Endothelial cell of umbilical vein (primary cell): ENCODE measurements at regions of chr5 and their contacts with region 1.

Region 1: GRCh38 chr5:173615884-173616576 is 420 bp downstream of the BOD1 start:
- DNase-seq: peak; percentile 81
- H3K4me3 ChIP-seq: peak overlapping the region; percentile 69 to 86 (median 82)
- H3K27ac ChIP-seq: peak overlapping the region; percentile 85
- H3K4me1 ChIP-seq: peaks cover 28% of the 10 kb centered on the region
- H3K27me3 ChIP-seq: no peaks in the 10 kb centered on the region
- CTCF ChIP-seq: peak; percentile 67 to 75
- POLR2A ChIP-seq: peak; percentile 15

Region 2: GRCh38 chr5:173293817-173294672 is 322.0 kb before region 1 on chr5:
- CTCF ChIA-PET with region 1: interaction called, 28 read pairs
- POLR2A ChIA-PET with region 1: no interaction called
- dilution Hi-C with region 1: no loop called
- intact Hi-C with region 1: no loop called
- DNase-seq: peak; percentile 75
- H3K4me3 ChIP-seq: no peak overlapping the region
- H3K27ac ChIP-seq: no peak overlapping the region
- H3K4me1 ChIP-seq: peaks cover 22% of the 10 kb centered on the region
- H3K27me3 ChIP-seq: no peaks in the 10 kb centered on the region
- CTCF ChIP-seq: peak; percentile 77 to 85
- POLR2A ChIP-seq: no peak

Region 3: DNA sequence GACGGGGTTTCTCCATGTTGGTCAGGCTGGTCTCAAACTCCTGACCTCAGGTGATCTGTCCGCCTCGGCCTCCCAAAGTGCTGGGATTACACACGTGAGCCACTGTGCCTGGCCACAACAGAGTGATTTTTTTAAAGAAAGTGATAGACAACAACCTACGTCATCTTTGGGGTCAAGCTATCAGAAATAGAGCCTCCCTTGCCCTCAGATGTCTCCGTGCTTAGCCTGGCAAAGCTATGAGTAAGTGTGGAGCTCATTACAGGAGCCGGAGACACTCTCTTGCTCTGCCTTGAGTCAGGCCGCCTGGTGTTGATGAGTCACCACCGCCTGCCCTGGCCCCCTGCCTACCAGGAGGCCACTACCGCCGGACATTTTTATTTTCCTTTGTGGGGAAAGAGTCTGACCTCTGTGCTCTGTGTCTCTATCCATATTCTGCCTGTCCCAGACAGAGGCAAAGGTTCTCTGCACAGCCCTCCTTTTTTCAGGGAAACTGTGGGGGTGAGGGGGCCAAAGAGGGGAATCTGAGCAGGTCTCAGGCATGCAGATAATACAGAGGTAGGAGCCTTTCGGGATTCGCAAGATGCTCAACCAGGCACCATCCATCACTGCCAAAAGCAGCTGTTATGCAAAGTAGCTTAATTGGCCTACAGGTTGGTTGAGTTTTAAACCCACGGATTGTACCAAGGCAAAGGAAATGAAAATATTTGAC is 148.4 kb after region 1 on chr5:
- CTCF ChIA-PET with region 1: interaction called, 4 read pairs
- POLR2A ChIA-PET with region 1: no interaction called
- dilution Hi-C with region 1: no loop called
- intact Hi-C with region 1: loop called (anchors 1 kb)
- DNase-seq: peak; percentile 92
- H3K4me3 ChIP-seq: peak overlapping the region in 1 of 3 experiments; percentile 20
- H3K27ac ChIP-seq: peak overlapping the region; percentile 91
- H3K4me1 ChIP-seq: peaks cover 27% of the 10 kb centered on the region
- H3K27me3 ChIP-seq: no peaks in the 10 kb centered on the region
- CTCF ChIP-seq: no peak
- POLR2A ChIP-seq: no peak

Region 4: GRCh38 chr5:173917788-173918786 is 302.1 kb after region 1 on chr5:
- CTCF ChIA-PET with region 1: interaction called, 7 read pairs
- POLR2A ChIA-PET with region 1: no interaction called
- dilution Hi-C with region 1: no loop called
- intact Hi-C with region 1: loop called (anchors 1 kb)
- DNase-seq: peak; percentile 93
- H3K4me3 ChIP-seq: peak overlapping the region; percentile 44 to 93 (median 65)
- H3K27ac ChIP-seq: peak overlapping the region; percentile 99
- H3K4me1 ChIP-seq: peaks cover 28% of the 10 kb centered on the region
- H3K27me3 ChIP-seq: no peaks in the 10 kb centered on the region
- CTCF ChIP-seq: no peak
- POLR2A ChIP-seq: peak; percentile 94

Region 5: DNA sequence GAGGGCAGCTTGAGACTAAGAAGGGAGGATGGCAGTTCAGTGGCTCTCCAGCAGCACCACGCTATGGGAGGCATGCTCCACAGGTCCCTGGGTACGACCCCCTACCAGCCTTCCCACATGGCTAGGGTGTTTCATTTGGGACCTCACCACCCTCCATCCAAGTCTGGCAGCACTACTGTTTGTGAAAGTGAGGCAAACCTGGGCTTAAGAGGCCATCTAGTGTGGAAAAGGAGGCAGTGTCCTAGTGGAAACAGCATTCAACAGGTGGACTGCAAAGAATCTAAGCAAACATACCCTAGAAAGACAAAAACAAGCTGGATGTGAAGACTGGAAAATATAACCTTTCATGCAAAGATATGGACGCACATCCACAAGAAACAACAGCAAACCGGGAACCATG is 368.2 kb after region 1 on chr5:
- CTCF ChIA-PET with region 1: interaction called, 12 read pairs
- POLR2A ChIA-PET with region 1: no interaction called
- dilution Hi-C with region 1: no loop called
- intact Hi-C with region 1: no loop called
- DNase-seq: peak; percentile 11
- H3K4me3 ChIP-seq: no peak overlapping the region
- H3K27ac ChIP-seq: no peak overlapping the region
- H3K4me1 ChIP-seq: no peaks in the 10 kb centered on the region
- H3K27me3 ChIP-seq: peaks cover 0 to 4% of the 10 kb centered on the region in 2 experiments
- CTCF ChIP-seq: peak in 1 of 2 donors; percentile 26
- POLR2A ChIP-seq: no peak

Region 6: GRCh38 chr5:174935854-174936474 is 1319.9 kb after region 1 on chr5:
- CTCF ChIA-PET with region 1: no interaction called
- POLR2A ChIA-PET with region 1: no interaction called
- dilution Hi-C with region 1: no loop called
- intact Hi-C with region 1: loop called (anchors 5 kb)
- DNase-seq: peak; percentile 14
- H3K4me3 ChIP-seq: no peak overlapping the region
- H3K27ac ChIP-seq: no peak overlapping the region
- H3K4me1 ChIP-seq: no peaks in the 10 kb centered on the region
- H3K27me3 ChIP-seq: no peaks in the 10 kb centered on the region
- CTCF ChIP-seq: peak; percentile 78 to 86
- POLR2A ChIP-seq: no peak